Calu3 (cell line): ENCODE measurements at regions of chr9 and their contacts with region 1.

Region 1: DNA sequence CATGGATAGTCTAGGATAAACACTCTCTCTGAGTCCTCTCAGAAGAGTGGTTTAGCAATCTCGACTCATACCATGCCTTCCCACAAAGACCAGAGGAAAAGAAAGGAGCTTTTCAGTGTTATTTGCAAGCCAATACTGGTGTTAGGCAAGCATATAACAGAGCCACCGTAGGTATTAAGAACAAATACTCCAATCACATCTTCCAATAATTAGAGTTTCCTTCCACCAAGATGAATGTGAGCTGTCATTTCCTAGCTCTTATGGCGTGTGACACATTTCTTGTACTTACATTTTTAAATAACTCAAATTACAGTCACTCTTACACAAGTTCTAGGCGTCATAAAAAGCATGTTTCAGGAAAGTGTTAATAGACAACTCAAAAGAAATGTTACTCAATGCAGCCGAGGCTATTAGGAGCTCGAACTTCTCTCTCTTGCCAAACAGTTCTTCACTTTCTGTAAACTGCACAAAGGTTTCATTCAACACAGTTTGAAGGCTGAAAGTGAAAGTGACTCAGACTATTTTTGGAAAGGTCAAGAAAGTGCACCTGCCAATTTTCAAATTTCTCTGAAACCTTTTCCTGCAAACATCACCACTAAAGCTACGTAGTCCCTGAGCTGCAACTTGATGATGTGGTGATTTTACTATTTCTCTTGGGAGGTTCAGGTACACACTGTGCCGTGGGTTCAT is 153.8 kb downstream of the AUH start:
- DNase-seq: no peak
- H3K4me3 Mint-ChIP-seq: peak overlapping the region; percentile 47
- H3K27ac Mint-ChIP-seq: peak overlapping the region; percentile 56
- H3K4me1 Mint-ChIP-seq: peaks cover 48% of the 10 kb centered on the region
- H3K27me3 Mint-ChIP-seq: no peaks in the 10 kb centered on the region
- CTCF ChIP-seq: no peak

Region 2: DNA sequence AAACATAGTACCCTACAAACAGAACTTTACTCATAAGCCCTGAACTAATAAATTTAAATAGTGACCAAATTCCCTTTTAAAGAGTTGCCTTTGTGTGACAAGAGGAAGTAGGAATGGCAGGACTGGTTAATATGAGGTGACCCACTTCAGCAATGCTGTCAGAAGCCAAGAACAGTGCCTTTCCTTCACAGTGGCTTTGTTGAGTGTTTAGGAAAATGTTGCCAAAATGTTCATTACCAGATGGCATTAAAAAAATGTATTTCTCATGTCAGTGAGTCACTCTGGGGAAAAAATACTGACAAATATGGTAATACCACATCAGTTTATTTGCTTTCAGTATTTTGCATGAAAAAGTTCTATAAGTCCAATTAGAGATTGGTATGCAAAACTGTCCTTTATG is 668.6 kb before region 1 on chr9:
- CTCF ChIA-PET with region 1: no interaction called
- intact Hi-C with region 1: no loop called
- DNase-seq: no peak
- H3K4me3 Mint-ChIP-seq: no peak overlapping the region
- H3K27ac Mint-ChIP-seq: no peak overlapping the region
- H3K4me1 Mint-ChIP-seq: no peaks in the 10 kb centered on the region
- H3K27me3 Mint-ChIP-seq: no peaks in the 10 kb centered on the region
- CTCF ChIP-seq: no peak

Region 3: GRCh38 chr9:91253488-91253887 is 45.6 kb after region 1 on chr9:
- CTCF ChIA-PET with region 1: no interaction called
- intact Hi-C with region 1: loop called (anchors 1 kb)
- DNase-seq: no peak
- H3K4me3 Mint-ChIP-seq: no peak overlapping the region
- H3K27ac Mint-ChIP-seq: no peak overlapping the region
- H3K4me1 Mint-ChIP-seq: no peaks in the 10 kb centered on the region
- H3K27me3 Mint-ChIP-seq: no peaks in the 10 kb centered on the region
- CTCF ChIP-seq: no peak

Region 4: GRCh38 chr9:91433180-91433579 is 225.3 kb after region 1 on chr9:
- CTCF ChIA-PET with region 1: interaction called, 12 read pairs
- intact Hi-C with region 1: no loop called
- DNase-seq: peak; percentile 32
- H3K4me3 Mint-ChIP-seq: no peak overlapping the region
- H3K27ac Mint-ChIP-seq: no peak overlapping the region
- H3K4me1 Mint-ChIP-seq: peaks cover 5% of the 10 kb centered on the region
- H3K27me3 Mint-ChIP-seq: no peaks in the 10 kb centered on the region
- CTCF ChIP-seq: no peak